Mammary epithelial cell (primary cell): ENCODE measurements at regions of chr5 and their contacts with region 1.

Region 1: GRCh38 chr5:138337685-138338410 is at the start of gene FAM53C:
- DNase-seq: peak; percentile 93
- H3K4me3 ChIP-seq: peak within 1 kb of the TSS; percentile 62 to 84 (median 67)
- H3K27ac ChIP-seq: peak within 1 kb of the TSS; percentile 92
- H3K4me1 ChIP-seq: peaks cover 4% of the 10 kb centered on the region
- H3K27me3 ChIP-seq: no peaks in the 10 kb centered on the region
- CTCF ChIP-seq: no peak
- total RNA-seq, gene FAM53C: 29.6 to 40.2 TPM

Region 2: DNA sequence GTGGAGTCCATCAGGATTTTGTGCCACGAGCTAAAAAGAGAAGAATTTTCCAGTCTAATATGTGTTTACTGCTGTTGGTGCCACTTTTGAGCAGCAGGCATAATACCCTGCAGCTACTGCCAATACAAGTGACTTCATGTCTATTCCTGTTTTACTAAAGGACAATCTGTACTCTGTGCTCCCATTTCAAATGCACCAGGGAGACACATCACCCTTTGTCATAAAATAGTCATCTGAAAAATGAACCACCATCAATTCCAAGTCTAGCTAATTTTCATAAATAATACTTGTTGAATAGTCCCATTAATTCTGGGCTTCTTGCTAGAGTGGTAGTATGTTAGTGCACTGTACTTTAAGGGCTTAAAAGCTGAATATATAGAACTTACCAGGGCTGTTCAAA is 457.5 kb before region 1 on chr5:
- CTCF ChIA-PET with region 1: no interaction called
- dilution Hi-C with region 1: no loop called
- in situ Hi-C with region 1: no loop called
- intact Hi-C with region 1: no loop called
- DNase-seq: peak; percentile 69
- H3K4me3 ChIP-seq: peak overlapping the region in 1 of 3 experiments; percentile 1
- H3K27ac ChIP-seq: peak overlapping the region; percentile 33
- H3K4me1 ChIP-seq: peaks cover 17% of the 10 kb centered on the region
- H3K27me3 ChIP-seq: no peaks in the 10 kb centered on the region
- CTCF ChIP-seq: no peak

Region 3: GRCh38 chr5:138352071-138352721 is 14.3 kb after region 1 on chr5 and contains the start of gene KDM3B:
- CTCF ChIA-PET with region 1: interaction called, 11 read pairs
- dilution Hi-C with region 1: no loop called
- in situ Hi-C with region 1: no loop called
- intact Hi-C with region 1: loop called (anchors 1 kb)
- DNase-seq: peak; percentile 81
- H3K4me3 ChIP-seq: peak within 1 kb of the TSS; percentile 77 to 83 (median 82)
- H3K27ac ChIP-seq: peak within 1 kb of the TSS; percentile 65
- H3K4me1 ChIP-seq: peaks cover 18% of the 10 kb centered on the region
- H3K27me3 ChIP-seq: no peaks in the 10 kb centered on the region
- CTCF ChIP-seq: peak; percentile 98
- total RNA-seq, gene KDM3B: 35.6 to 42.7 TPM

Region 4: GRCh38 chr5:138369706-138370105 is 31.9 kb after region 1 on chr5:
- CTCF ChIA-PET with region 1: no interaction called
- dilution Hi-C with region 1: no loop called
- in situ Hi-C with region 1: no loop called
- intact Hi-C with region 1: no loop called
- DNase-seq: no peak
- H3K4me3 ChIP-seq: no peak overlapping the region
- H3K27ac ChIP-seq: no peak overlapping the region
- H3K4me1 ChIP-seq: no peaks in the 10 kb centered on the region
- H3K27me3 ChIP-seq: no peaks in the 10 kb centered on the region
- CTCF ChIP-seq: no peak

Region 5: GRCh38 chr5:138386290-138386689 is 48.4 kb after region 1 on chr5:
- CTCF ChIA-PET with region 1: no interaction called
- dilution Hi-C with region 1: no loop called
- in situ Hi-C with region 1: no loop called
- intact Hi-C with region 1: no loop called
- DNase-seq: no peak
- H3K4me3 ChIP-seq: no peak overlapping the region
- H3K27ac ChIP-seq: no peak overlapping the region
- H3K4me1 ChIP-seq: no peaks in the 10 kb centered on the region
- H3K27me3 ChIP-seq: no peaks in the 10 kb centered on the region
- CTCF ChIP-seq: no peak

Region 6: GRCh38 chr5:138438724-138439476 is 101.1 kb after region 1 on chr5 and contains the start of gene REEP2:
- CTCF ChIA-PET with region 1: no interaction called
- dilution Hi-C with region 1: loop called (anchors 5 kb)
- in situ Hi-C with region 1: no loop called
- intact Hi-C with region 1: no loop called
- DNase-seq: peak; percentile 43
- H3K4me3 ChIP-seq: peak within 1 kb of the TSS; percentile 39 to 48 (median 43)
- H3K27ac ChIP-seq: no peak within 1 kb of the TSS
- H3K4me1 ChIP-seq: peaks cover 16% of the 10 kb centered on the region
- H3K27me3 ChIP-seq: no peaks in the 10 kb centered on the region
- CTCF ChIP-seq: no peak
- total RNA-seq, gene REEP2: 14.5 to 26.5 TPM

Region 7: DNA sequence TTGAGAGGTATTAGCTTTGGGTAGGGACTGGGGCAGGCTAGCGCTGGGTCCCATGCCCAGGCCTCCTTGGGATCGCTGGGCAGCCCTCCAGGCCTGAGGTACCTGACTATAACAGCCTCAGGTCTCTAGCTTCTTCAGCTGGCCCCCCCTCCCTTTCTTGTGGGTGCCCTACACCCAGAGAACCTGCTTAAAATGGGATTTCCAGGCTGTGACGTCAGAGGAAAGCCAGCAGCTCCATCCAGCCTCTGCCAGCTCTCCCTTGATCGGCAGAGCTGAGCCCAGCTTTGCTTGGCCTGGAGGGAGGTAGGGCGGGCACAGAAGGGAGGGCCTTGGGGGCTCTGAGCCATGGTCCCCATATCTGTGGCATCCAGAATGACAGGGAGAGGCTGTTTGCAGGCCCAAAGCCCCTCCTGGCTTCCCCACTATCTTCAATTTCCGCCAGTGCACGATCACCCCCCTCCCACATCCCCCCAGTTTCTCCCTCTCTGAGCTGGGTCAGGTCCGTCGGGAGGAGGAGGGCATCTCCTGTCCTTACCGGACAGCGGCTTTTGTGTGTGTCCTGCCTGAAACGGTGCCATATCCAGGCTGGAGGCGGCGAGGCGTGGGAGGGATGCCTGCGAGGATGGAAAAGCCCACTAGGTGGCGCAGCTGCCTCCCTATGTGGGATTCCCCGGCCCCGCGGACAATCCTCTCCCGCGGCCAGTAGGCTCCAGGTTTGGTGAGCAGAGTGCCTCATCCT is 111.8 kb after region 1 on chr5:
- CTCF ChIA-PET with region 1: no interaction called
- dilution Hi-C with region 1: no loop called
- in situ Hi-C with region 1: no loop called
- intact Hi-C with region 1: no loop called
- DNase-seq: peak; percentile 76
- H3K4me3 ChIP-seq: no peak overlapping the region
- H3K27ac ChIP-seq: no peak overlapping the region
- H3K4me1 ChIP-seq: peaks cover 6% of the 10 kb centered on the region
- H3K27me3 ChIP-seq: no peaks in the 10 kb centered on the region
- CTCF ChIP-seq: peak; percentile 91 to 95